Psoas muscle (tissue), 8 donors: ENCODE measurements at regions of chr1 and their contacts with region 1.

Region 1: GRCh38 chr1:151098126-151098525 is 27.6 kb downstream of the GABPB2 start:
- DNase-seq: peak in 1 of 2 donors; percentile 4
- ATAC-seq: no peak
- H3K4me3 ChIP-seq: no peak overlapping the region
- H3K27ac ChIP-seq: no peak overlapping the region
- H3K4me1 ChIP-seq: no peaks in the 10 kb centered on the region
- H3K27me3 ChIP-seq: no peaks in the 10 kb centered on the region
- CTCF ChIP-seq: no peak

Region 2: DNA sequence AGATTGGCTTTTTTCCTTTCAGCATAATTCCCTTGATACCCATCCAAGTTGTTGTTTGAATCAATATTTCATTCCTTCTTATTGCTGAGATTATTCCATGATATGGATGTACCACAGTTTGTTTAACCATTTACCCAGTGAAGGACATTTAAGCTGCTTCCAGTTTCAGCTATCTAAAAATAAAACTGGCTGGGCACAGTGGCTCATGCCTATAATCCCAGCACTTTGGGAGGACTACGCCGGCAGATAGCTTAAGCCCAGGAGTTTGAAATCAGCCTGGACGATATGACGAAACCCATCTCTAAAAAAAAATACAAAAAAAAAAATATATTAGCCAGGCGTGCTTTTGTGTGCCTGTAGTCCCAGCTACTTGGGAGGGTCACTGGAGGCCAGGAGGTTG is 15.8 kb after region 1 on chr1:
- intact Hi-C with region 1: no loop called
- DNase-seq: peak in 1 of 2 donors; percentile 2
- ATAC-seq: peak in 3 of 4 donors; percentile 58 to 85 (median 68)
- H3K4me3 ChIP-seq: no peak overlapping the region
- H3K27ac ChIP-seq: no peak overlapping the region
- H3K4me1 ChIP-seq: peaks cover 11% of the 10 kb centered on the region
- H3K27me3 ChIP-seq: no peaks in the 10 kb centered on the region
- CTCF ChIP-seq: no peak

Region 3: DNA sequence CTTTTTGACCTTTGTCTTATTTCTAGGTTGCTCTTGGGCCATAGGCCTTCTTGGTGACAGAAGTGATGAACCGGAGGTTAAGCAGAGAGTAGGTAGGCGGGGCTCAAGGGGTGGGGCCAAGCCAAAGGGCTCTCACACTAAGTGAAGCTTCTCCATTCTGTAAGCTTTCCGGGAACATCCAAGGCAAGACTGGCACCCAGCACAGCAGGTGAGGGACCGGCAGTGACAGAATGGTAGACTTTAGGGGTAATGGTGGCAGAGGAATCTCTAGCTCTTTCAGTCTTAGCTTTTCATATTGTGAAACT is 58.3 kb after region 1 on chr1 and contains the start of gene TNFAIP8L2:
- intact Hi-C with region 1: loop called (anchors 1 to 2 kb)
- DNase-seq: peak in 1 of 2 donors; percentile 75
- ATAC-seq: peak in 2 of 4 donors; percentile 26 to 33
- H3K4me3 ChIP-seq: peak within 1 kb of the TSS; percentile 37
- H3K27ac ChIP-seq: peak within 1 kb of the TSS; percentile 43
- H3K4me1 ChIP-seq: no peaks in the 10 kb centered on the region
- H3K27me3 ChIP-seq: no peaks in the 10 kb centered on the region
- CTCF ChIP-seq: no peak
- total RNA-seq, gene TNFAIP8L2: 0.56 to 1.3 (median 0.74) TPM

Region 4: GRCh38 chr1:151243683-151244216 is 145.6 kb after region 1 on chr1:
- intact Hi-C with region 1: loop called (anchors 10 kb)
- DNase-seq: no peak
- ATAC-seq: no peak
- H3K4me3 ChIP-seq: no peak overlapping the region
- H3K27ac ChIP-seq: no peak overlapping the region
- H3K4me1 ChIP-seq: peaks cover 3% of the 10 kb centered on the region
- H3K27me3 ChIP-seq: no peaks in the 10 kb centered on the region
- CTCF ChIP-seq: no peak